Right ventricle myocardium superior (tissue), 1 donor: ENCODE measurements at regions of chr6 and their contacts with region 1.

Region 1: GRCh38 chr6:159693128-159693893 is at the start of gene SOD2:
- DNase-seq: peak; percentile 92
- ATAC-seq: peak; percentile 89
- total RNA-seq, gene SOD2: 1,058 TPM

Region 2: DNA sequence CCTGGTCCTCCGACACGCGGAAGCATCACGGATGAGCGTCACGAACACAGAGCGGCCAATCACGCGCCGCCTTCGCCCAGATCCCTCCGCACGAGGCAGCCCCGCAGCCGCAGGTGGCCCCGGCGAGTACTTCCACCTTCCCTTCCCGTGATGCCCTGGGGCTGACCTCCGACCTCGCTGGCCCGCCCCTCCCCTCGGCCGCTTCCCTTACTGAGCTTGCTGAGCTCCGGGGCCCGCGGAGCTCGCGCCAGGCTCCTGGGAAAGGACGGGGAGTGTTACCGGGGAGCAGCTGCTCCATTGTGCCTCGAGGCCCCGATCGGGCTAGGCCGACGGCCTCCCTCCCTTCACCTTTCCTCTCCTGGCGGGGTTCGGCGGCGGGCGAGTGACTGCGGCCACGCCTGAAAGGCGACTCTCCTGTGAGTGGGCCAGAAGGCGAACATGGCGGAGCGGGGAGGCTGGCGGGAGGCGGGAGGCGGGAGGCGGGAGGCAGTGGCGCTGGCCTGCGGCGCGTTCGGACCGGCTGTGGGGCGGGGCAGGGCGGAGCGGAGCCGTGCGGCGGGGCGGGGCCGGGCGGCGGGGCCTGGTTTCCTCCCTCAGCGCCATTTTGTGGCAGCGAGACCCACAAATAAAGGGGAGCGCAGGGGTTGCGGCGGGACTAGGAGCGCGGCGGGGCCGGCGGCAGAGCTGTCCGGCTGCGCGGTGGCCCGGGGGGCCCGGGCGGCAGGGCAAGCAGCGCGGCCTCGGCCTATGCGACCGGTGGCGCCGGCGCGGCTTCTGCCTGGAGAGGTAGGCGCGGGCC is 33.8 kb after region 1 on chr6 and contains the start of gene WTAP:
- intact Hi-C with region 1: loop called (anchors 5 kb)
- DNase-seq: peak; percentile 96
- ATAC-seq: peak; percentile 96
- total RNA-seq, gene WTAP: 40.1 TPM

Region 3: DNA sequence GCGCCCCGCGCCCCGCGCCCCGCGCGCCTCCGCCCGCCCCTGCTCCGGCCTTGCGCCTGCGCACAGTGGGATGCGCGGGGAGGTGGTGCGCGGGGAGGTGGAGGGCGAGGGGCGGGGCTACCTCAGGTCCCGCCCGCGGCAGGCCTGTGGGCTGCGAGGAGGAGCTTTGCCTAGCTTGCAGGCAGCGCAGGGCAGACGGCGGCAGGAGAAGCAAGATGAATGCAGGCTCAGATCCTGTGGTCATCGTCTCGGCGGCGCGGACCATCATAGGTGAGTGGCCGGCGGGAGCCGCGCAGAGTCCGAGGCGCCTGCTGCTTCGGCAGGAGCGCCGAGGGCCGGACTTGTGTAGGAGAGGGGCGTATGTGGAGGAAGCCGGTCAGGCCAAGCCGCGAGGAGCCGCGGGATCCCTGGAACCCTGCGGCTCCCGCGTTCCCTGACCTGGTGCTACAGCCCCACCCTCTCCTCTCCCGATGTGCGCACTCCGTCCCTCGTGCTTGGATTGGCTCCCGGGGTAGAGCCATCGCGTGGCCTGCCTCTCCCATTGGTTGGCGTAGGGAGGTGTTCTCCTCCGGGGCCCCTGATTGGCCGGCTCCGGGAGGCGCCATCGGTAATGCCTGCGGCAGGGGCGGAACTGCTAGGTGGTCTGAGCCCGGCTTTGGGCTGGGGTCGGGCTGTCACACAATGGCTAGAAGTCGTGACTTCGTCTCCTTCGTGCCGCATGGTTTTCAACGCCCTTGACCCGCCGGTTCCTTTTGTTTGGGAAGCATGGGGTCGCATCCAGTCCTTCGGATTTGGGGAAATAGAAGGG is 68.8 kb after region 1 on chr6 and contains the start of gene ACAT2:
- intact Hi-C with region 1: loop called (anchors 5 kb)
- DNase-seq: peak; percentile 97
- ATAC-seq: peak; percentile 99
- total RNA-seq, gene ACAT2: 4.1 TPM

Region 4: GRCh38 chr6:159789377-159790148 is 96.3 kb after region 1 on chr6 and contains the start of gene TCP1:
- intact Hi-C with region 1: loop called (anchors 2 kb)
- DNase-seq: peak; percentile 100
- ATAC-seq: peak; percentile 95
- total RNA-seq, gene TCP1: 159 TPM

Region 5: GRCh38 chr6:159874435-159874834 is 181.1 kb after region 1 on chr6:
- intact Hi-C with region 1: no loop called
- DNase-seq: peak; percentile 76
- ATAC-seq: peak; percentile 56

Region 6: DNA sequence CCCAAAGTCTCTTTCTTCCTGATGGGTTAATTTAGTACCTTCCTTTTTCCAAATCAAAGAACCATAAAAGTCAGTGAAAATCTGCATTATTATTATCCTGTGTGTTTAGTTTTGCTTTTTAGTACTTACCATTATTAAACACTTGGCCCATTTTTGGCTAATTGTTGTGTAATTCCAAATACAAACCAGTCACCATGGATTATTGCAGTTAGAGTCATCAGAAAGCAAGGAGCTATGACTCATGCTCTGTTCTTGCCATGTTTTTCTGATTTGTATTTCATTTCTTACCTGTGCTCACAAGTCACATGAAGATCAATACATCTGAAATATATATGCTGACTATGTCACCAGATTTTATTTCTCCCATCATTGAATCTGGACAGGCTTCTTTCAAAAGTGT is 686.2 kb after region 1 on chr6:
- intact Hi-C with region 1: no loop called
- DNase-seq: no peak
- ATAC-seq: no peak